OCI-LY7 (cell line): ENCODE measurements at regions of chr1 and their contacts with region 1.

Region 1: DNA sequence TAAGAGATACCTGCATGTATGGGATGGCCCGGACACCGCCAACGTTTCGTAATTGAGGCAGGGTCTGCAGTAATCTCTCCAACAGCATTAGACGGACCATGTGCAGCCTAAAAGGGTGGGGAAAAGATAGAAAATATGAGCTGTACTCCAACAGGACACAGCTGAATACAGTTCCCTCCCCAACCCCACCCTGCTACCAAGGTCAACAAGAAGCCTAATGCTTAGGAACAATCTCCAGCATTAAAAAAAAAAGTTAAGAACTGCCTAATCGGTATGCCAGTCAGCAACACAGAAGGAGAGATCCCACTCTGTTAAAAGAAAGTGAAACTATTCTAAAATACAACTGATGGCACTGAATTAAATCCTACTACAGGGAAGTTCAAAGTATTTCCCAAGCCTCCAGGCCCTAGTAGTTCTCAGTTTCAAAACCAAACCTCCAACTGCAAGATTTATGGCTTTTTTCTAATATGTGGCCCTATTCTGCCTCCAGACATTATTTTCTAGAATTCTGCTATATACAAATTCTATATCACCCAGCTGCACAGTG is 81.0 kb downstream of the UBR4 start:
- DNase-seq: no peak
- H3K4me3 ChIP-seq: no peak overlapping the region
- H3K27ac ChIP-seq: no peak overlapping the region
- H3K4me1 ChIP-seq: no peaks in the 10 kb centered on the region
- CTCF ChIP-seq: no peak

Region 2: GRCh38 chr1:19139711-19140110 is 10.7 kb after region 1 on chr1:
- CTCF ChIA-PET with region 1: no interaction called
- POLR2A ChIA-PET with region 1: interaction called, 12 read pairs
- intact Hi-C with region 1: no loop called
- DNase-seq: no peak
- H3K4me3 ChIP-seq: no peak overlapping the region
- H3K27ac ChIP-seq: no peak overlapping the region
- H3K4me1 ChIP-seq: no peaks in the 10 kb centered on the region
- CTCF ChIP-seq: no peak